ENCODE measurements at regions of chr14 and their contacts with region 1.

Region 1: GRCh38 chr14:73307261-73307660 is 70.0 kb downstream of the PAPLN start:
- DNase-seq: no peak
- H3K4me3 ChIP-seq: no peak overlapping the region
- H3K27me3 ChIP-seq: no peaks in the 10 kb centered on the region
- CTCF ChIP-seq: no peak

Region 2: GRCh38 chr14:73250781-73251602 is 56.3 kb before region 1 on chr14:
- CTCF ChIA-PET with region 1: no interaction called
- POLR2A ChIA-PET with region 1: no interaction called
- DNase-seq: no peak
- H3K4me3 ChIP-seq: no peak overlapping the region
- H3K27me3 ChIP-seq: no peaks in the 10 kb centered on the region
- CTCF ChIP-seq: no peak

Region 3: GRCh38 chr14:73295198-73295796 is 12.0 kb before region 1 on chr14:
- CTCF ChIA-PET with region 1: interaction called, 13 read pairs
- POLR2A ChIA-PET with region 1: no interaction called
- DNase-seq: no peak
- H3K4me3 ChIP-seq: no peak overlapping the region
- H3K27me3 ChIP-seq: no peaks in the 10 kb centered on the region
- CTCF ChIP-seq: peak; percentile 64

Region 4: DNA sequence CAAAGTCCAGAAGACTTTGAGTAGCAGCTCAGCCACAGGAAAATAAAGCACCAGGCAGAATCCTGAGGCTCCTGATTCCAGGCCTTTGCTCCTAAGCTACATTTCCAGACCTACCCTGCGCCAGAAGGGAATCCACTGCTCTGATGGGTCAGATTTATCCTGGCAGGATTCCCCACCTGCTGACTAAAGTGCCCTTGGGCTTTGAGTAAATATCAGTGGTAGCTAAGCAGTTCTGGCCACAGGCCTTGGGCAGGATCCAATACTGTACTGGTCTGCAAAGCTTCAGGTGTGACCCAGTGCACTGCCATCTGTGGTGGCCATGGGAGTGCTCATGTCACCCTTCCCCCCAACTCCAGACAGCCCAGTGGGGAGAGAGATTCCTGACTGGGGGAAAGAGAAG is 219.3 kb after region 1 on chr14:
- CTCF ChIA-PET with region 1: no interaction called
- POLR2A ChIA-PET with region 1: no interaction called
- DNase-seq: no peak
- H3K4me3 ChIP-seq: no peak overlapping the region
- H3K27me3 ChIP-seq: no peaks in the 10 kb centered on the region
- CTCF ChIP-seq: no peak

Measured in BJ (cell line).